Naive thymus-derived CD4-positive, alpha-beta T cell (primary cell): ENCODE measurements at regions of chr2 and their contacts with region 1.

Region 1: GRCh38 chr2:195575879-195576401 is 81.1 kb upstream of the SLC39A10 start:
- DNase-seq: peak in 1 of 9 donors; percentile 20
- ATAC-seq: peak; percentile 49
- H3K4me3 ChIP-seq: no peak overlapping the region
- H3K4me3 Mint-ChIP-seq: peak overlapping the region; percentile 14 to 79 (median 63)
- H3K27ac ChIP-seq: peak overlapping the region; percentile 21
- H3K27ac Mint-ChIP-seq: peak overlapping the region; percentile 27 to 94 (median 85)
- H3K4me1 ChIP-seq: peaks cover 15 to 51% of the 10 kb centered on the region in 2 donors
- H3K4me1 Mint-ChIP-seq: peaks cover 38 to 91% (median 82%) of the 10 kb centered on the region in 7 donors
- H3K27me3 ChIP-seq: no peaks in the 10 kb centered on the region
- H3K27me3 Mint-ChIP-seq: no peaks in the 10 kb centered on the region

Region 2: DNA sequence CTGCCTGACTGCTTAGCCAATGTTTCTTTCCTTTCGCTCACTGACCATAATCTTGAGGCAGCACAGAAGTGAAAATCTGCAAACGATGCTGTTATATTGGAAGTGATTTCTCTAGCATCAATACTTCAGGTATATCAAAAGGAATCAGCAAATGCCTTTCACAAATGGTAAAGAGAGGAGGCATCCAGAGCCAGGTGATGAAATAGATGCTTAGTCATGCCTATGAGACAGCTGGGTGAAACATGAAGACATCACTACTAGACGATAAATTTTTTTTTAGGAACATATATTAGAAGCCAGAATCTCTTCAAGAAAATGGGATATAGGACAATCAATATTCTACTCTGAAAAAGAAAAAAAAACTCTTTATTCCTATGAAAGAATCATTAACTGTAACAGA is 168.2 kb before region 1 on chr2:
- CTCF ChIA-PET with region 1: no interaction called
- POLR2A ChIA-PET with region 1: no interaction called
- intact Hi-C with region 1: loop called in 1 of 2 experiments (anchors 5 kb)
- DNase-seq: no peak
- ATAC-seq: no peak
- H3K4me3 ChIP-seq: no peak overlapping the region
- H3K4me3 Mint-ChIP-seq: no peak overlapping the region
- H3K27ac ChIP-seq: no peak overlapping the region
- H3K27ac Mint-ChIP-seq: peak overlapping the region in 1 of 9 donors; percentile 76
- H3K4me1 ChIP-seq: no peaks in the 10 kb centered on the region
- H3K4me1 Mint-ChIP-seq: peaks cover 0 to 17% (median under 1%) of the 10 kb centered on the region in 7 donors
- H3K27me3 ChIP-seq: no peaks in the 10 kb centered on the region
- H3K27me3 Mint-ChIP-seq: no peaks in the 10 kb centered on the region

Region 3: DNA sequence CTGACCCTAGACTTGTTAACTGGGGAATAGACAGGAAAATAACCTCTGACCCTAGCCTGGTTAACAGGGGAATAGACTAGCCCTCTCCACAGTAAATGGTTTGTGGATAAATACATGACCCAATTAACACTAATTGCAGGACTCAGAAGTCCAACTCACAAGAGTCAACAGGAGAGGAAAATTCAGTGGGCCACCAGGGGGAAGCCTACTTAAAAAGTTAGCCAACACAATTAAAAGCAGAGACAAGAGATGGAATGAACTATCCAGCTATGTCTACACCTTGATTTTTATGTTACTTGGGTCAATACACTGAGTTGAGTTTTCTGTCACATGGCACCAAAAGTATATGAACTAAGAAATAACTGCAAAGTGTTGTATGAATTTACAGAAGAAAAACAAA is 77.8 kb before region 1 on chr2:
- CTCF ChIA-PET with region 1: interaction called, 39 read pairs
- POLR2A ChIA-PET with region 1: interaction called, 4 read pairs
- intact Hi-C with region 1: loop called in 1 of 2 experiments (anchors 1 kb)
- DNase-seq: peak in 7 of 9 donors; percentile 25 to 60 (median 47)
- ATAC-seq: peak; percentile 68
- H3K4me3 ChIP-seq: no peak overlapping the region
- H3K4me3 Mint-ChIP-seq: peak overlapping the region in 4 of 10 donors; percentile 20 to 60 (median 32)
- H3K27ac ChIP-seq: no peak overlapping the region
- H3K27ac Mint-ChIP-seq: peak overlapping the region in 7 of 9 donors; percentile 14 to 88 (median 63)
- H3K4me1 ChIP-seq: peaks cover 0 to 19% of the 10 kb centered on the region in 2 donors
- H3K4me1 Mint-ChIP-seq: peaks cover 12 to 81% (median 54%) of the 10 kb centered on the region in 7 donors
- H3K27me3 ChIP-seq: no peaks in the 10 kb centered on the region
- H3K27me3 Mint-ChIP-seq: no peaks in the 10 kb centered on the region

Region 4: GRCh38 chr2:195533771-195534642 is 41.9 kb before region 1 on chr2:
- CTCF ChIA-PET with region 1: interaction called, 32 read pairs
- POLR2A ChIA-PET with region 1: interaction called, 26 read pairs
- intact Hi-C with region 1: loop called in 1 of 2 experiments (anchors 1 kb)
- DNase-seq: peak in 8 of 9 donors; percentile 28 to 63 (median 42)
- ATAC-seq: peak; percentile 48
- H3K4me3 ChIP-seq: peak overlapping the region; percentile 51
- H3K4me3 Mint-ChIP-seq: peak overlapping the region; percentile 77 to 95 (median 90)
- H3K27ac ChIP-seq: peak overlapping the region; percentile 77
- H3K27ac Mint-ChIP-seq: peak overlapping the region; percentile 92 to 100 (median 98)
- H3K4me1 ChIP-seq: peaks cover 70 to 73% of the 10 kb centered on the region in 2 donors
- H3K4me1 Mint-ChIP-seq: peaks cover 69 to 90% (median 86%) of the 10 kb centered on the region in 7 donors
- H3K27me3 ChIP-seq: no peaks in the 10 kb centered on the region
- H3K27me3 Mint-ChIP-seq: no peaks in the 10 kb centered on the region

Region 5: DNA sequence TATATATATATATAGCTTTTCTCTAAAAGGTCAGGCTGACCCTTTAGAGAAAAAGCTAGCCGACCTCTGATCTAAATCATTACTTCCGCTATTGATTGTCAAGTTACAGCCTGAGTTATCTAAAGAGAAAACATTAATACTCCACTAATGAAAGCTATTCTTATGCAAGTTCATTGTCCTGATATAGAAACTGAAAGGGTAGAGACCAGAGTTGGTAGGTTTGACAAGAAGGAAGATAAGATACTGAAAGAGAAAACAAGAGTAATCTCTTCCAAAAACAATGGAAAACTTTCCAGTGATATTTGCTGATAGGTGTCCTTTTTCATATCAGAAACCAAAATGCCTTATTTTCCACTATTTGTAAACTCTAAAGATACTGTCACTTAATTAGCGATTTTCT is 18.3 kb after region 1 on chr2:
- CTCF ChIA-PET with region 1: interaction called, 5 read pairs
- POLR2A ChIA-PET with region 1: interaction called, 8 read pairs
- intact Hi-C with region 1: loop called in 1 of 2 experiments (anchors 1 kb)
- DNase-seq: no peak
- ATAC-seq: no peak
- H3K4me3 ChIP-seq: no peak overlapping the region
- H3K4me3 Mint-ChIP-seq: peak overlapping the region in 2 of 10 donors; percentile 12 to 19
- H3K27ac ChIP-seq: no peak overlapping the region
- H3K27ac Mint-ChIP-seq: peak overlapping the region in 3 of 9 donors; percentile 4 to 16 (median 7)
- H3K4me1 ChIP-seq: peaks cover 0 to 7% of the 10 kb centered on the region in 2 donors
- H3K4me1 Mint-ChIP-seq: peaks cover 10 to 40% (median 26%) of the 10 kb centered on the region in 7 donors
- H3K27me3 ChIP-seq: no peaks in the 10 kb centered on the region
- H3K27me3 Mint-ChIP-seq: no peaks in the 10 kb centered on the region

Region 6: DNA sequence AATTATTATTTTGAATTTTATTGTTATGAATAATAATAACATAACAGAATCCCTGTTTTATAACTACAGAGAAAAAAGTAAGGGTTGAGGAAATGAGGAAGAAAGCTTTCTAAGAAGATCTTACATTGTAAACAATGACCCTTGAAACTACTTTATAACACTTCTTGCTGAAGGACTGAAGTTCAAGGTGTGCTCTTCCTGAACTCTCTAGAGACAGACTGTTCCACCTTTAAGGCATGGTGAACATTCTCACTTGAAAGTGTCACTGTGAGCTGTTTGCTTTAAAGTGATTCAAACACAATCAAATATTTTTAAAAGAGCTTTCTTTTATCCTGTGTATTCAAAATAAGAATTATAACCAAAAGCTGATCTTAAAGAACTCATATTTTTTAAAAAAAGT is 361.2 kb after region 1 on chr2:
- CTCF ChIA-PET with region 1: interaction called, 3 read pairs
- POLR2A ChIA-PET with region 1: no interaction called
- intact Hi-C with region 1: loop called in 1 of 2 experiments (anchors 1 kb)
- DNase-seq: no peak
- ATAC-seq: no peak
- H3K4me3 ChIP-seq: no peak overlapping the region
- H3K4me3 Mint-ChIP-seq: no peak overlapping the region
- H3K27ac ChIP-seq: no peak overlapping the region
- H3K27ac Mint-ChIP-seq: no peak overlapping the region
- H3K4me1 ChIP-seq: no peaks in the 10 kb centered on the region
- H3K4me1 Mint-ChIP-seq: no peaks in the 10 kb centered on the region
- H3K27me3 ChIP-seq: no peaks in the 10 kb centered on the region
- H3K27me3 Mint-ChIP-seq: peaks cover 0 to 15% (median 9%) of the 10 kb centered on the region in 5 donors

Region 7: GRCh38 chr2:196259507-196260481 is 683.9 kb after region 1 on chr2:
- CTCF ChIA-PET with region 1: no interaction called
- POLR2A ChIA-PET with region 1: no interaction called
- intact Hi-C with region 1: no loop called
- DNase-seq: peak in 6 of 9 donors; percentile 18 to 66 (median 50)
- ATAC-seq: peak; percentile 44
- H3K4me3 ChIP-seq: peak overlapping the region; percentile 31
- H3K4me3 Mint-ChIP-seq: peak overlapping the region; percentile 70 to 85 (median 81)
- H3K27ac ChIP-seq: peak overlapping the region; percentile 87
- H3K27ac Mint-ChIP-seq: peak overlapping the region; percentile 92 to 99 (median 96)
- H3K4me1 ChIP-seq: peaks cover 41 to 62% of the 10 kb centered on the region in 2 donors
- H3K4me1 Mint-ChIP-seq: peaks cover 39 to 79% (median 76%) of the 10 kb centered on the region in 7 donors
- H3K27me3 ChIP-seq: no peaks in the 10 kb centered on the region
- H3K27me3 Mint-ChIP-seq: no peaks in the 10 kb centered on the region

Region 8: GRCh38 chr2:196337208-196337953 is 761.4 kb after region 1 on chr2:
- CTCF ChIA-PET with region 1: no interaction called
- POLR2A ChIA-PET with region 1: no interaction called
- intact Hi-C with region 1: loop called in 1 of 2 experiments (anchors 1 kb)
- DNase-seq: peak in 5 of 9 donors; percentile 10 to 39 (median 19)
- ATAC-seq: peak; percentile 52
- H3K4me3 ChIP-seq: no peak overlapping the region
- H3K4me3 Mint-ChIP-seq: no peak overlapping the region
- H3K27ac ChIP-seq: no peak overlapping the region
- H3K27ac Mint-ChIP-seq: no peak overlapping the region
- H3K4me1 ChIP-seq: no peaks in the 10 kb centered on the region
- H3K4me1 Mint-ChIP-seq: peaks cover 0 to 6% (median 1%) of the 10 kb centered on the region in 7 donors
- H3K27me3 ChIP-seq: no peaks in the 10 kb centered on the region
- H3K27me3 Mint-ChIP-seq: peaks cover 0 to 18% (median 3%) of the 10 kb centered on the region in 5 donors